Activated T-helper 1 cell treated with anti-CD3 and anti-CD28 coated beads, Interleukin-12 subunit alpha, Interleukin-12 subunit beta, Interleukin-2, Interleukin-4 antibody, amounts not matched to agents 30 ng/mL and 10 ng/mL and 1 ng/mL, durations not matched to agents 14 hours and 24 hours and 36 hours (primary cell): ENCODE measurements at regions of chr7 and their contacts with region 1.

Region 1: GRCh38 chr7:30164567-30164966 is 29.8 kb downstream of the MTURN start:
- DNase-seq: no peak
- H3K4me3 Mint-ChIP-seq: no peak overlapping the region
- H3K27ac Mint-ChIP-seq: no peak overlapping the region
- H3K4me1 Mint-ChIP-seq: peaks cover 45% of the 10 kb centered on the region
- H3K27me3 Mint-ChIP-seq: peaks cover 3% of the 10 kb centered on the region

Region 2: DNA sequence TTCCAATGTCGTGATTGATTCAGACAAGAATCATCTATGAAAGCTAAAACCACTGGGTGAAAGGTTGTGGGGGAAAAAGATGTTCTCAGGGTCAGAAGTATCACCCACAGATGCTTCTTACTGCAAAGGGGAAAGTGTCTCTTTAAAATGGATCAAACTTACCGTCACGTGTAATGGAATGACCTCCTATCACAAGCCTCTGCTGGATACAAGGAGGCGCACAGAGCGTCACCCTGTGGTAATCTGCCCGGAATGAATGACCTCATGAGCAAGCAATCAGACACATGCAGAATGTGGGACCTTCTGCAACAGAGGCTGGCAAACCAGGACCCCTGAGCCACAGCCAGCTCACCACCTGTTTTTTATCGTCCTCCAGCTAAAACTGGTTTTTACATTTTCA is 325.3 kb before region 1 on chr7:
- intact Hi-C with region 1: no loop called
- DNase-seq: no peak
- H3K4me3 Mint-ChIP-seq: no peak overlapping the region
- H3K27ac Mint-ChIP-seq: no peak overlapping the region
- H3K4me1 Mint-ChIP-seq: no peaks in the 10 kb centered on the region
- H3K27me3 Mint-ChIP-seq: no peaks in the 10 kb centered on the region

Region 3: DNA sequence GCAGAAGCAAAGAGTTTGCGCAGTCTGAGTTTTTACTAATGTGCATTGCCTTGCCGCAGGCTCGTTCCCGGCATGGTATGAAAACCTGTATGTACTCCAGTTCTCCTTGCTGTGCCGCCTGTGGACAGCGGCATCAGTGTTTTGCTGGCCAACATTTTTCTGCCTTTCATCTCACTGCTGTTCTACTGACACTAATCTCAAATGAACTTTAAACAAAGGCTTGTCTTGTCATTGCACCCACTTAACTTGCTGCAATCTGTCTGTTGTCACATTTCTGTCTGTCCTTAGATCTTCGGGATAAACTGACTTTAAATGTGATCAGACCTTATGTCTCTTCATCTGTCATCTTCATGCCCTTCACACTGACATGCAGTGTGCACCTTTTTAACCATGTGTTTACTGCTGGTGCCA is 48.1 kb after region 1 on chr7:
- intact Hi-C with region 1: no loop called
- DNase-seq: no peak
- H3K4me3 Mint-ChIP-seq: no peak overlapping the region
- H3K27ac Mint-ChIP-seq: no peak overlapping the region
- H3K4me1 Mint-ChIP-seq: no peaks in the 10 kb centered on the region
- H3K27me3 Mint-ChIP-seq: peaks cover 15% of the 10 kb centered on the region

Region 4: GRCh38 chr7:30412810-30413504 is 248.4 kb after region 1 on chr7:
- intact Hi-C with region 1: loop called (anchors 2 kb)
- DNase-seq: no peak
- H3K4me3 Mint-ChIP-seq: no peak overlapping the region
- H3K27ac Mint-ChIP-seq: no peak overlapping the region
- H3K4me1 Mint-ChIP-seq: no peaks in the 10 kb centered on the region
- H3K27me3 Mint-ChIP-seq: no peaks in the 10 kb centered on the region

Region 5: DNA sequence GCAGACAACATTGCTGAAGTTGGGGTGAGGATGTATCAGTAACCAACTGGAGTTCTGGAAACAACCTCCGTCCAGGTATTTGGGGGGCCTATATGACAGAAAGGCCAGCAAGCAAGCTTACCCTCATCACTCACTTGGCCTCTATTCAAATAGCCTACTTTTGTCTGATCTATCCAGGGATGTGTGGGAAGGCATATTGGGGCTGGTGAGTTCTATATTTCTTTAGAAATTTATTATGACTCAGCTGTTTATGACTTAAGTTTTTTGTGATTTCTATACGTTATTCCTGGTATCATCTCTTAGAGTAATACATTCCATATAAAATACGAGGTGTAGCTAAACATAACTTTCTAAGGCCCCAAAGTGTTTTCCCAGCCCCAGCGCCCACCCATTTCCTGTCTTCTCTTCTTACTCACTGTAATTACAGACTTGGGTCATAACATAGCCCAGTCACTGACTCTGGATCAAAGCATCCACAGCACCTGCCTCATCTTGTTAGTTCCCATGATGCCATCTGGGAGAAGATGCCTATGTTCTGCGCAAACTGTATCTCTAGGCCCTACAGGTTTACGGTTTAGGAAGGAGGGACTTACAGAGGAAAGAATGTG is 448.2 kb after region 1 on chr7:
- intact Hi-C with region 1: no loop called
- DNase-seq: no peak
- H3K4me3 Mint-ChIP-seq: peak overlapping the region; percentile 41
- H3K27ac Mint-ChIP-seq: peak overlapping the region; percentile 55
- H3K4me1 Mint-ChIP-seq: peaks cover 35% of the 10 kb centered on the region
- H3K27me3 Mint-ChIP-seq: no peaks in the 10 kb centered on the region